ENCODE measurements at regions of chr10 and their contacts with region 1.

Region 1: DNA sequence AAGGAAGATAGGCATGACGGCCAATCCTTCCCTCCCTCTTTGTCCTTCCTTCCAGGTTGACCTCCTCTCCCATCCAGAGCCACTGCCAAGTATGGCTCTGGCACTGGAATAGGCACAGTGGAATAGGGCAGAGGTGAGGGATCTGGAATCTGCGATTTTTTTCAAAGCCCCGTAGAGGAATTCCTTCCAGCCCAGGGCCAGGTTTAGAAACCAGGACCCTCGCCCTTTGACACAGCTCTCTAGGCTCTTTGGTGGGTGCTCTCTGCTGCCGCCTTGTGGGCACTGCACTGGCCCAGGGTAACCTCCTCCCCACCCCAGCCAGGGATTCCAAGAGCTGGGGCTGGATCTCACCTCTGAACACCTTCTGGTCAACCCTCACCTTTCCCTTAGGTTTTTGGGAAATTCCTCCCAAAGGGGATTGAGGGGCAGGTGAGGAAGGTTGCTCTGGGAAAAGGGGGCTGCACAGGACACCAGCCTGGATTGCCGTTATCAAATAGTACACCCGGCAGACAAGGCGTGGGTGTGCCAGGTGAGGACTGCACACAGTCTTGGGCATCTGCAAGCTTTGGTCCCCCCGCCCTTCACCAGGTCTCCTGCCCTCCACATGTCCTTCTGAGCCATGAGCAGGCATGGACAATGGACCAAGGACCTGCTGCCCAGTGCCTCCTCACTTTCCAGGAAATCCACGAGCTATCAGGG is 22.8 kb downstream of the C10orf105 start:
- H3K4me3 ChIP-seq: no peak overlapping the region
- H3K27ac ChIP-seq: no peak overlapping the region
- H3K4me1 ChIP-seq: no peaks in the 10 kb centered on the region
- CTCF ChIP-seq: peak; percentile 54

Region 2: GRCh38 chr10:71383972-71384687 is 312.6 kb before region 1 on chr10:
- CTCF ChIA-PET with region 1: interaction called, 57 read pairs
- POLR2A ChIA-PET with region 1: no interaction called
- H3K4me3 ChIP-seq: no peak overlapping the region
- H3K27ac ChIP-seq: no peak overlapping the region
- H3K4me1 ChIP-seq: no peaks in the 10 kb centered on the region
- CTCF ChIP-seq: peak; percentile 83

Region 3: DNA sequence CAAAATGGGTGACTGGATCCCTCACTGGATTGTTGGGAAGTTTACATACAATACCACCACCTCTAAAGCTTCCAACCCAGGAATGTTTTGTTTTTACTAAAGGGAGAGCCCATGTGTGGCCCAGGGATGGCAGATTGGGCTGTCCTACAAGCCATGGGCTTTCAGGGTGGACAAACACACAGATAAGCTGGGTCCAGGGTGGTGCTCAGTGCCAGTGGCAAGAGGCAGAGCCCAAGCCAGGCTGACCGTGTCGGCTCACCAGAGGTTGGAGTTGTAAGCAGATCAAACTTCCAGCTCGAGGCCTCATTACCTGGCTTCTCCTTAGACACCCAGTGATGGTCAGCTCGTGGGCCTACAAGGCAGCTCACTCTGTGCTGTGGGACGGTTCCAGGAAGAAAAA is 247.8 kb before region 1 on chr10:
- CTCF ChIA-PET with region 1: no interaction called
- POLR2A ChIA-PET with region 1: no interaction called
- H3K4me3 ChIP-seq: no peak overlapping the region
- H3K27ac ChIP-seq: no peak overlapping the region
- H3K4me1 ChIP-seq: no peaks in the 10 kb centered on the region
- CTCF ChIP-seq: no peak

Region 4: DNA sequence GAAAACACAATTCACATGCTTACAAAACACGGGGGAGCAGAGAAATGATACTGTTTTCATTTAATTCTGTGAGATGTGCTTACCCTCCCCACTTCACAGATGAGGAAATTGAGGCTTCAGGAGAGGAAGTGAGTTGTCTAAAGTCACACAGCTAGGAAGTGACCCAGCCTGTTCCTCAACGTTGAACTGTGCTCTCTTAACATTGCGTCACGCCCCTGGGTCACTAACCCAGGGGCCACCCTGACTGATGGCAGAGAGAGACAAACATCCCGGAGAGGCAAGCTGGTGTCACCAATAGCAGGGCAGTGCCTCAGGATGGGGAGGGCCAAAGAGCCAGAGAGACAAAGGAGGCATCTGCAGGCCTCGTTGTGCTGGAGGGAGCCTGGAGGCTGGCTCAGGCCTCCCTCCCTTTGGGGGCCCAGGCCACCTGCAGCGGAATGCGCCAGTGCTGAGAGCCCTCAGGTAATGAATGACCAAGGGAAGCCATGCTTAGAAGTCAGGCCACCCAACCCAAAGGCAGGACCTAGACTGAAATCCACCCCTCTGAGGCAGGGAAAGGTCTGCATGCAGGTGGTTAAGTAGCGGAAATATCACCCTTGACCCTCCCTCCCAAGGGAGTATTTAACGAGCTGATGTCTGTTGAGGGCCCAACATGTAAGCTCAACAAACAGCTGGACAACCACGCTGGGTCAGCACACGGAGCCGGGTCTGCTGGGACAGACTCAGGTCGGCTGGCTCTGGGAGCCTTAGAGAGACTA is 58.5 kb before region 1 on chr10:
- CTCF ChIA-PET with region 1: interaction called, 10 read pairs
- POLR2A ChIA-PET with region 1: no interaction called
- H3K4me3 ChIP-seq: no peak overlapping the region
- H3K27ac ChIP-seq: no peak overlapping the region
- H3K4me1 ChIP-seq: no peaks in the 10 kb centered on the region
- CTCF ChIP-seq: no peak

Region 5: GRCh38 chr10:71708301-71708703 is 11.5 kb after region 1 on chr10:
- CTCF ChIA-PET with region 1: interaction called, 55 read pairs
- POLR2A ChIA-PET with region 1: no interaction called
- H3K4me3 ChIP-seq: no peak overlapping the region
- H3K27ac ChIP-seq: no peak overlapping the region
- H3K4me1 ChIP-seq: no peaks in the 10 kb centered on the region
- CTCF ChIP-seq: peak; percentile 78

Region 6: GRCh38 chr10:71771821-71772617 is 75.2 kb after region 1 on chr10:
- CTCF ChIA-PET with region 1: interaction called, 12 read pairs
- POLR2A ChIA-PET with region 1: no interaction called
- H3K4me3 ChIP-seq: no peak overlapping the region
- H3K27ac ChIP-seq: no peak overlapping the region
- H3K4me1 ChIP-seq: no peaks in the 10 kb centered on the region; the same call in 1 of the 2 replicates
- CTCF ChIP-seq: no peak